HCT116 (cell line): ENCODE measurements at regions of chr5 and their contacts with region 1.

Region 1: DNA sequence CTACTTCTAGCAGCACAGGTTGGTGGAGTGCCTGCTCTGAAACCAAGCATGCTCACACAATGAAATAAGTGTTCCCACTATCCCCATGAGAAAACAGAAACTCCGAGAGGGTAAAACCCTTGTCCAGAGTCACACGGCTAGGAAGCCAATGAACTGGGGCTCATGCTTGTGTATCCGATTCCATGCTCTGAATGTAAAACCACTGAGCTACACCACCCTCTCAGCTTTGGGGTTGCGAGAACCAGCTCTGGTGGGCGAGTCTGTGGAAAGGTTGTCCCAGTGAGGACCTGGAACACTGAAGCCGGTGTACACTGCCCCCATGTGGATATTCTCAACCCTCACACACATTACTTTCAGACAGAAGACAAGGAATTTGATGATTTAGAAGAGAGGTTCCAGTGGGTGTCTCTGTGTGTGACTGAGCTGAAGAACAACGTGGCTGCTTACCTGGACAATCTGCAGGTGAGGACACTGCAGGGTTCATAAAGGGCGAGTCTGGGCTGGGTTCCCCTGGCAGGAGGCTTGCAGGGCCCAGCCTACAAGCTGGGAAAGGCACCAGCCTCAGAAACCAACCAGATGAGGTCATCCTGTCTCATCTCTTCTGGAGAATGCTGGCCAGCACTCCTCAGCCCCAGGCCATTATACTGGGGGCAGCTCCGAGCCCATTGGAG is 37.4 kb downstream of the ARHGEF37 start:
- DNase-seq: peak; percentile 47
- ATAC-seq: peak; percentile 95
- H3K4me3 ChIP-seq: no peak overlapping the region
- H3K27ac ChIP-seq: no peak overlapping the region
- H3K4me1 ChIP-seq: peaks cover 2 to 24% of the 10 kb centered on the region in 2 experiments; a peak in 3 of 4 replicates
- H3K27me3 ChIP-seq: no peaks in the 10 kb centered on the region
- CTCF ChIP-seq: peak; percentile 72 to 90 (median 87)
- POLR2A ChIP-seq: no peak
- RAD21 ChIP-seq: peak; percentile 97

Region 2: GRCh38 chr5:148820461-148821395 is 798.0 kb before region 1 on chr5:
- CTCF ChIA-PET with region 1: no interaction called
- POLR2A ChIA-PET with region 1: no interaction called
- RAD21 ChIA-PET with region 1: no interaction called
- intact Hi-C with region 1: no loop called
- DNase-seq: peak; percentile 31
- ATAC-seq: peak; percentile 83
- H3K4me3 ChIP-seq: no peak overlapping the region
- H3K27ac ChIP-seq: no peak overlapping the region
- H3K4me1 ChIP-seq: peaks cover 5 to 6% of the 10 kb centered on the region in 2 experiments; a peak in 2 of 4 replicates
- H3K27me3 ChIP-seq: no peaks in the 10 kb centered on the region
- CTCF ChIP-seq: peak; percentile 60 to 78 (median 78); a peak in 5 of 6 replicates
- POLR2A ChIP-seq: no peak
- RAD21 ChIP-seq: peak; percentile 49

Region 3: GRCh38 chr5:149367249-149367971 is 251.3 kb before region 1 on chr5:
- CTCF ChIA-PET with region 1: interaction called, 6 read pairs
- POLR2A ChIA-PET with region 1: no interaction called
- RAD21 ChIA-PET with region 1: no interaction called
- intact Hi-C with region 1: loop called (anchors 5 kb)
- DNase-seq: peak; percentile 79
- ATAC-seq: peak; percentile 82
- H3K4me3 ChIP-seq: no peak overlapping the region
- H3K27ac ChIP-seq: no peak overlapping the region
- H3K4me1 ChIP-seq: peaks cover 4 to 9% of the 10 kb centered on the region in 2 experiments; a peak in 3 of 4 replicates
- H3K27me3 ChIP-seq: no peaks in the 10 kb centered on the region
- CTCF ChIP-seq: peak; percentile 93 to 97 (median 94)
- POLR2A ChIP-seq: no peak
- RAD21 ChIP-seq: peak; percentile 86

Region 4: GRCh38 chr5:149381987-149382340 is 236.8 kb before region 1 on chr5:
- CTCF ChIA-PET with region 1: interaction called, 4 read pairs
- POLR2A ChIA-PET with region 1: no interaction called
- RAD21 ChIA-PET with region 1: interaction called in 1 of 2 experiments, 4 read pairs
- intact Hi-C with region 1: loop called (anchors 2 kb)
- DNase-seq: peak; percentile 33
- ATAC-seq: peak; percentile 97
- H3K4me3 ChIP-seq: no peak overlapping the region
- H3K27ac ChIP-seq: no peak overlapping the region
- H3K4me1 ChIP-seq: peaks cover 0 to 6% of the 10 kb centered on the region in 2 experiments; a peak in 2 of 4 replicates
- H3K27me3 ChIP-seq: no peaks in the 10 kb centered on the region
- CTCF ChIP-seq: peak; percentile 88 to 93 (median 90)
- POLR2A ChIP-seq: no peak
- RAD21 ChIP-seq: peak; percentile 96

Region 5: GRCh38 chr5:149442563-149443182 is 176.0 kb before region 1 on chr5:
- CTCF ChIA-PET with region 1: interaction called, 22 read pairs
- POLR2A ChIA-PET with region 1: no interaction called
- RAD21 ChIA-PET with region 1: no interaction called
- intact Hi-C with region 1: loop called (anchors 2 kb)
- DNase-seq: no peak
- ATAC-seq: peak; percentile 71
- H3K4me3 ChIP-seq: no peak overlapping the region
- H3K27ac ChIP-seq: no peak overlapping the region; the same call in 1 of the 2 replicates
- H3K4me1 ChIP-seq: peaks cover 41 to 77% of the 10 kb centered on the region in 2 experiments
- H3K27me3 ChIP-seq: no peaks in the 10 kb centered on the region
- CTCF ChIP-seq: peak in 2 of 3 experiments; percentile 90 to 91; a peak in 4 of 6 replicates
- POLR2A ChIP-seq: no peak
- RAD21 ChIP-seq: no peak

Region 6: DNA sequence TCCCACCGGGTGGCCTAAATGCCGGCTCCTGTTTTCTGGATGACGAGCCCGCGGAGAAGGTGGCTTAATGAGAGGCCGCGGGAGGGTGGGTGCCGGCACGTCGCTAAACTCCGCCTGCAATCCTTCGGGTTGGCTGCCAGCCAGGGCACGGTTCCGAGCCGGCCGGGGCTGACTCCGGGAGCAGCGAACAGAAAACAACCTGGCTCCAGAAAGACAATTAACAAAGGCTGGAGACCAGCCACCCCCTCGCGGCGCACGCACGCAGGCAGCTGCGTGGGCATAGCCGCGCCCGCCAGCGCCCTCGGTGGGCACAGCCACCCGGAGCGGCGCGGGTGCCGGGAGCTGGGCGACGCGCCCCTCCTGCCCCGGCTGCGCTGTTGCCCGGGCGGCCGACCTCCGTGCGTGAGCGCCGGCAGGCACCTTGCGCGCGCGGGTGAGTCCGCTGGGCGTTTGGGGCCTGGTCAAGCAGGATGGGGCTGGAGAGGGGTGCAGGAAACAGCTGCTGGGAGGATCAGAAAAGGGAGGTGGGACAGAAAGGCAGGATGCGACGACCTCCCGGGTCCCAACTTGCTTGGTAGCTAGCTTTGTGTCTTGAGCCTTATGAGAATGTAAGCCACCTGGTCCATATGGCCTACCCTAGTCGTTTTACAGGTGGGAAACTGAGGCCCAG is 37.4 kb before region 1 on chr5 and contains the start of gene ARHGEF37:
- CTCF ChIA-PET with region 1: interaction called, 10 read pairs
- POLR2A ChIA-PET with region 1: no interaction called
- RAD21 ChIA-PET with region 1: interaction called in 1 of 2 experiments, 3 read pairs
- intact Hi-C with region 1: no loop called
- DNase-seq: peak; percentile 33
- ATAC-seq: peak; percentile 82
- H3K4me3 ChIP-seq: peak within 1 kb of the TSS; percentile 58 to 70
- H3K27ac ChIP-seq: peak within 1 kb of the TSS; percentile 74
- H3K4me1 ChIP-seq: peaks cover 9 to 31% of the 10 kb centered on the region in 2 experiments
- H3K27me3 ChIP-seq: no peaks in the 10 kb centered on the region
- CTCF ChIP-seq: no peak
- POLR2A ChIP-seq: no peak
- RAD21 ChIP-seq: no peak
- total RNA-seq, gene ARHGEF37: 7.0 TPM

Region 7: DNA sequence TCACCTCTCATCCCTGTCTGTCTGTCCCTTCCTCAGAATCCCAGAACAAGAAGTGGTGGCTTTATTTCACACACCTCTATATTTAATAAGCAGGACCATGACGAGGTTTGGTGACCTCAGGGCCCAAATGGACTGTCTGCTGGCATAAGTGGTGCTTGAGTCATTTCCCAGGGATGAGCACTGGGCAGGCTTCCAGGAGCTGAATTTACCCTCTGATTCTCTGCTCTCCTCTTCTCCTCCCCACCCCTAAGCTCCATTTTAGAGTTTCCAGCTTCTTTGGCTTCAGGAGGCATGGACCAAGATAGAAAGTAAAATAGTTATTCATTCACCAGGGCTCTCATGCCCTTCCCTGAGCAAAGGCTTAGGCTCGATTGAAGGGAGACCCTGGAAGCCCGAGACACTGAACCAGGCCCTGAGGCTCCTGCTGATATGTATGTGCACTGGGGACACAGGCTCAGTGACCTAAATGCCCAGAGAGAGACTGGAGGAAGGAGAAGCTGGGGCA is 180.5 kb after region 1 on chr5:
- CTCF ChIA-PET with region 1: no interaction called
- POLR2A ChIA-PET with region 1: no interaction called
- RAD21 ChIA-PET with region 1: no interaction called
- intact Hi-C with region 1: no loop called
- DNase-seq: no peak
- ATAC-seq: peak; percentile 67
- H3K4me3 ChIP-seq: no peak overlapping the region
- H3K27ac ChIP-seq: no peak overlapping the region
- H3K4me1 ChIP-seq: peaks cover 13 to 29% of the 10 kb centered on the region in 2 experiments
- H3K27me3 ChIP-seq: no peaks in the 10 kb centered on the region
- CTCF ChIP-seq: no peak
- POLR2A ChIP-seq: no peak
- RAD21 ChIP-seq: no peak

Region 8: DNA sequence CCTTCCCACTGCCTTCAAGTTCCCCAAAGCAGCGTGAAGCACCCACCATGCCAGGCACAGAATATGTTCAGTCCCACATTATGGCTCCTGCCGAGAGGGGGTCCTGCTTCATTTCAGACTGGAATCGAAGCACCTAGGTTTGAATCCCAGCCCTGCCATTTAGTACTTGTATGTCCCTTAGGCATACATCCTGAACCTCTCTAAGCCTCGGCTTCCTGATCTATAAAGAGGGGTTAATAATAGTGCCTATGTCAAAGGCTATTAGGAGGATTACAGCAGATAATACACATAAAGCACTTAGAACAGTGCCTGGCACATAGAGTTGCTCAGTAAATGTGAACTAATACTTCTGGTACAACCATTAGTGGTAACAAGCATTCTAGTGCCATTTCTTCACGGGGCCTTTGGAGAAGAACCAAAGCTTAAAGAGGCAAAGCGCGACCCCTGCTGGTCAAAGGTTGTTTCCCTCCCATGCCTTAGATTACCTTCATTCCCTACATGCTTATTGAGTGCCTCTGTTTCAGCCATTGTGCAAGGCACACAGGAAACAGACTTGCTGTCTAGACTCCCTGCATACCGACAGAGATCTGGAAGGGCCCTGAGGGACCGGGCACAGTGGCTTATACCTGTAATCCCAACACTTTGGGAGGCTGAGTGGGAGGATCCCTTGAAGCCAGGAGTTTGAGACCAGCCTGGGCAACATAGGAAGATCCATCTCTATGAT is 209.6 kb after region 1 on chr5:
- CTCF ChIA-PET with region 1: no interaction called
- POLR2A ChIA-PET with region 1: no interaction called
- RAD21 ChIA-PET with region 1: no interaction called
- intact Hi-C with region 1: no loop called
- DNase-seq: peak; percentile 77
- ATAC-seq: peak; percentile 92
- H3K4me3 ChIP-seq: no peak overlapping the region
- H3K27ac ChIP-seq: no peak overlapping the region
- H3K4me1 ChIP-seq: peaks cover 0 to 2% of the 10 kb centered on the region in 2 experiments; a peak in 1 of 4 replicates
- H3K27me3 ChIP-seq: no peaks in the 10 kb centered on the region
- CTCF ChIP-seq: peak; percentile 79 to 95 (median 91)
- POLR2A ChIP-seq: no peak
- RAD21 ChIP-seq: peak; percentile 97

Region 9: GRCh38 chr5:150112261-150113046 is 493.7 kb after region 1 on chr5:
- CTCF ChIA-PET with region 1: no interaction called
- POLR2A ChIA-PET with region 1: no interaction called
- RAD21 ChIA-PET with region 1: no interaction called
- intact Hi-C with region 1: no loop called
- DNase-seq: no peak
- ATAC-seq: peak; percentile 12; the same call in 1 of the 2 replicates
- H3K4me3 ChIP-seq: no peak overlapping the region
- H3K27ac ChIP-seq: no peak overlapping the region
- H3K4me1 ChIP-seq: peaks cover 0 to 30% of the 10 kb centered on the region in 2 experiments; a peak in 2 of 4 replicates
- H3K27me3 ChIP-seq: no peaks in the 10 kb centered on the region
- CTCF ChIP-seq: no peak
- POLR2A ChIP-seq: no peak
- RAD21 ChIP-seq: no peak